Activated T-helper 2 cell treated with anti-CD3 and anti-CD28 coated beads, Interferon-gamma antibody, Interleukin-2, Interleukin-4, amounts not matched to agents 10 μg/mL and 5 μg/mL and 100 μg/mL, durations not matched to agents 14 hours and 24 hours and 36 hours (primary cell): ENCODE measurements at regions of chrX and their contacts with region 1.

Region 1: DNA sequence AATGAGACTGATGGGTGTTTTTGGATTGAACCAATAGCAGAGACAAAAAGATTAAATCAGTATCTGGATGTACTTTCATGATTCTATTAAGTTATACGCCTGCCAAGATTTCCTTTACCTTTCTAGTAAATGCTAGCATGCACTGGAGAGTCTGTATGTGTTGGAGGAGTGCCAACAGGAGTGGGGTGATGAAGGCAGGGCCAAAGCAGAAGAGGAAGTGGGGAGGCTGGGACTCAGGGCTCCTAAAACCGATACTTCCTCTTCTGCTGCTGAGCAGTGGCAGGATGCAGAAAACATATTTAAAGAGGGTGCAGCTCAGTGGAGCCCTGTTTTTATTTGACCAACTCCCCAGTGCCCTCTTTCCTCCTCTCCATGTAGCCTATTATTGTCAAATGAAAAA is 5.6 kb downstream of the CYSLTR1 start:
- DNase-seq: peak; percentile 38
- H3K4me3 Mint-ChIP-seq: peak overlapping the region; percentile 33
- H3K27ac Mint-ChIP-seq: peak overlapping the region; percentile 89
- H3K4me1 Mint-ChIP-seq: peaks cover 30% of the 10 kb centered on the region
- H3K27me3 Mint-ChIP-seq: no peaks in the 10 kb centered on the region

Region 2: DNA sequence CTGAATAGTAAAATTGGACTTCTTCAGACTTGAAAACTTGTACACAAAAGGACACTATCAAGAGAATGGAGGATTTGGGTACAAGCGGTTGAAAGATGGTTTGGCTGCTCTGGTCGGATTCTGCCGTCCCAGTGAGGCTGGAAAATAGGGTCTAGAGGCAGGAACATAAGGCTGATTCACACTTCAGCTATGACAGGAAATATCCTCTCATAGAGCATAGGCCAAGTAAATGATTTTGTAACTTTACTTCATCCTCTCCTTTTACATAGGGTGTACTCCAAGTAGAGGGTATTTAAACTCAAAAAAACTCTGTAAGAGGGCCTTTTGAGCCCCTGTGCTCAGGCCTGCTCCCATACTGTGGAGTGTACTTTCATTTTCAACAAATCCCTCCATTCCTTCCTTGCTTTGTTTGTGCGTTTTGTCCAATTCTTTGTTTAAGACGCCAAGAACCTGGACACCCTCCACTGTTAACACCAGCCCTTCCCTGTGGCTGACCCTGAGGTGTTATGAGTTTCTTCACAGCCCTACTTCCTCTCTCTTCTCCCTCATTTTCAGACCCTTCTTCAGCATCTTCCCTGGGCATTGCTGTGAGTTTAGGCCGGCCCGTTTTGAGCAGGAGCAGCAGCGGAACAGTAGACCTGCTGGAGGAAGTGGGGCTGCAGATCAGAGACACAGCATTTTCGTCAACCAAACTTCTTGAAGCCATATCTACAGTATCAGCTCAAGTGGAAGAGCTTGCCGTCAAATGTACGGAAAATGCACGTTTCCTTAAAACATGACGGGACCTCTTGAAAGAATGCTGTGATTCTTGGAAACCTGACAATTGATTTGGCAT is 359.5 kb before region 1 on chrX:
- intact Hi-C with region 1: no loop called
- DNase-seq: no peak
- H3K4me3 Mint-ChIP-seq: peak overlapping the region; percentile 70
- H3K27ac Mint-ChIP-seq: peak overlapping the region; percentile 93
- H3K4me1 Mint-ChIP-seq: peaks cover 23% of the 10 kb centered on the region
- H3K27me3 Mint-ChIP-seq: no peaks in the 10 kb centered on the region

Region 3: DNA sequence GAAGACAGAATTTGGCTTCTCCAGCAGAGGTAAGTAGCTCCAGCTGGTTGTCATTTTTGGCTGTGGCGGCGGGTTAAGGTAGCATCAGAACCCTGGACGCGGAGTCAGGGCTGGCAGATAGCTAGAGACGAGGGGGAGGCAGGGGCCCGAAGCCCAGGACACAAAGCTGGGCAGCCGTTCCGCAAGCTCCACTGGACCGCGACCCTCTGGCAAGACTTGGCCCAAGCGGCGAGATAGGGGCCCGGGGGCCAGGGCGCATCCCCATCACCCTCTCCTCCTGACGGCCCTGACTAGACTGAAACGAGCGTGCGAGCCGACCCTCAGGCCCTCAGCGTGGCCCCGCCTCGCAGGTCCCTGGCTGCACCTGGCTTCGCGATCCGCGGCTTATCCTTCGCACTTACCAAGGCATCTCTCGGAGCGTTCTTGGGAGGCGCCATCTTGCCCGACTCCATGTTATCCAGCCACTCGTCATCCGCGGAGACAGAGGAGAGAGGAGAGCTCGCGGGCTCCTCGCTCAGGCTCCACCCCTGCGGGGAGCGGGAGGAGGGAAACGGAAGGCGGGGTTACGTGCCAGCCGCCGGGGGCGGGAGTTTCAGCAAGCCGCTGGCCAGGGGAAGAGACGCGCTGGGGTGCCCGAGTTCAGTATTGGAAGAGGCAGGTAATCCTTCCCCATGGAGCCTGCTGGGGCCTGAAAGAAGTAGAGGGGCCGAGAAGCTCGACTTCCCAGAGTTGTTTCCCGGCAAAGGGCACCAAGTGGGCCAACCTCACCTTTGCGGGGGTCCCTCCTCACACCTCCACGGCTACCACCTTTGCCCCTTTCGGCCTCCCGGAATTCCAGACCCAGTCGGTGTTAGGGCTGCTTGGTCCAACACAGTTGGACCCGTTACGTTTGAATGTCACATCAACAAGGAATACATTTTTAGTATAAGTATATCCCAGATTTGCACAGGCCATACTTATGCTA is 182.4 kb before region 1 on chrX and contains the start of gene TAF9B:
- intact Hi-C with region 1: loop called (anchors 2 kb)
- DNase-seq: peak; percentile 80
- H3K4me3 Mint-ChIP-seq: peak within 1 kb of the TSS; percentile 88
- H3K27ac Mint-ChIP-seq: peak within 1 kb of the TSS; percentile 93
- H3K4me1 Mint-ChIP-seq: peaks cover 8% of the 10 kb centered on the region
- H3K27me3 Mint-ChIP-seq: no peaks in the 10 kb centered on the region
- total RNA-seq, gene TAF9B: 16.8 and 17.0 TPM in 2 replicates

Region 4: GRCh38 chrX:79630033-79631009 is 1308.5 kb after region 1 on chrX:
- intact Hi-C with region 1: no loop called
- DNase-seq: no peak
- H3K4me3 Mint-ChIP-seq: no peak overlapping the region
- H3K27ac Mint-ChIP-seq: no peak overlapping the region
- H3K4me1 Mint-ChIP-seq: peaks cover 2% of the 10 kb centered on the region
- H3K27me3 Mint-ChIP-seq: no peaks in the 10 kb centered on the region